Uterus (tissue), 4 donors: ENCODE measurements at regions of chr4 and their contacts with region 1.

Region 1: DNA sequence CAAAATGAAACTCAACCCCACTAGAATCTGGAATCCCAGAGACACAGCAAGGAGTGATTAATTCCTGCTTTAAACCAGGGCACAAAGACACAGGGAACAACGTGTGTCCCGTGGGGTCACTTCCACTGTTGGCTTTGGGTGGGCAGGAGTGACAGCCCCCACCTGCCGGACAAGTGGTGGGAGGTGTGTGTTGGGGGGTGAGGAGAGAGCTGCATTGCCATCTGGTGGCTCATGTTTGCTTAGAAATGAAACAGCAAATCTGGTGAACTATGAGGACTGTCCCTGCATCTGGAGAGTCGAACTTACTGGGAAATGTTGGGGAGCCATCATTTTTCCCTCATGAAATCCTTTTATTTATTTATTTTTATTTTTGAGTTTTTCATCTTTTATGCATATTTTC is 75.9 kb upstream of the AFAP1 start:
- DNase-seq: no peak
- H3K4me3 ChIP-seq: no peak overlapping the region
- H3K27ac ChIP-seq: no peak overlapping the region
- H3K4me1 ChIP-seq: no peaks in the 10 kb centered on the region
- H3K27me3 ChIP-seq: no peaks in the 10 kb centered on the region
- CTCF ChIP-seq: peak in 3 of 4 experiments; percentile 21 to 40 (median 37)
- POLR2A ChIP-seq: no peak

Region 2: GRCh38 chr4:8383451-8384160 is 368.1 kb after region 1 on chr4:
- intact Hi-C with region 1: loop called (anchors 10 kb)
- DNase-seq: no peak
- H3K4me3 ChIP-seq: no peak overlapping the region
- H3K27ac ChIP-seq: no peak overlapping the region
- H3K4me1 ChIP-seq: no peaks in the 10 kb centered on the region
- H3K27me3 ChIP-seq: no peaks in the 10 kb centered on the region
- CTCF ChIP-seq: no peak
- POLR2A ChIP-seq: no peak